CD14-positive monocyte (primary cell): ENCODE measurements at regions of chr5 and their contacts with region 1.

Region 1: GRCh38 chr5:67209142-67209771 is 12.7 kb upstream of the CD180 start:
- DNase-seq: peak; percentile 66 to 83 (median 74)
- H3K4me3 ChIP-seq: no peak overlapping the region
- H3K4me3 Mint-ChIP-seq: peak overlapping the region; percentile 44 to 52
- H3K27ac ChIP-seq: no peak overlapping the region
- H3K27ac Mint-ChIP-seq: peak overlapping the region in 4 of 7 donors; percentile 5 to 59 (median 25)
- H3K4me1 ChIP-seq: peaks cover 41 to 43% of the 10 kb centered on the region in 2 donors
- H3K4me1 Mint-ChIP-seq: peaks cover 47% of the 10 kb centered on the region
- H3K27me3 ChIP-seq: no peaks in the 10 kb centered on the region
- H3K27me3 Mint-ChIP-seq: peaks cover 0 to 5% (median 4%) of the 10 kb centered on the region in 3 donors
- CTCF ChIP-seq: peak; percentile 86

Region 2: GRCh38 chr5:67156976-67157583 is 52.2 kb before region 1 on chr5:
- intact Hi-C with region 1: loop called in 1 of 2 experiments (anchors 5 kb)
- DNase-seq: peak; percentile 22 to 54 (median 40)
- H3K4me3 ChIP-seq: no peak overlapping the region
- H3K4me3 Mint-ChIP-seq: no peak overlapping the region
- H3K27ac ChIP-seq: no peak overlapping the region
- H3K27ac Mint-ChIP-seq: no peak overlapping the region
- H3K4me1 ChIP-seq: peaks cover 0 to 9% of the 10 kb centered on the region in 2 donors
- H3K4me1 Mint-ChIP-seq: peaks cover 8% of the 10 kb centered on the region
- H3K27me3 ChIP-seq: no peaks in the 10 kb centered on the region
- H3K27me3 Mint-ChIP-seq: peaks cover 0 to 2% (median 0%) of the 10 kb centered on the region in 3 donors
- CTCF ChIP-seq: peak; percentile 96

Region 3: DNA sequence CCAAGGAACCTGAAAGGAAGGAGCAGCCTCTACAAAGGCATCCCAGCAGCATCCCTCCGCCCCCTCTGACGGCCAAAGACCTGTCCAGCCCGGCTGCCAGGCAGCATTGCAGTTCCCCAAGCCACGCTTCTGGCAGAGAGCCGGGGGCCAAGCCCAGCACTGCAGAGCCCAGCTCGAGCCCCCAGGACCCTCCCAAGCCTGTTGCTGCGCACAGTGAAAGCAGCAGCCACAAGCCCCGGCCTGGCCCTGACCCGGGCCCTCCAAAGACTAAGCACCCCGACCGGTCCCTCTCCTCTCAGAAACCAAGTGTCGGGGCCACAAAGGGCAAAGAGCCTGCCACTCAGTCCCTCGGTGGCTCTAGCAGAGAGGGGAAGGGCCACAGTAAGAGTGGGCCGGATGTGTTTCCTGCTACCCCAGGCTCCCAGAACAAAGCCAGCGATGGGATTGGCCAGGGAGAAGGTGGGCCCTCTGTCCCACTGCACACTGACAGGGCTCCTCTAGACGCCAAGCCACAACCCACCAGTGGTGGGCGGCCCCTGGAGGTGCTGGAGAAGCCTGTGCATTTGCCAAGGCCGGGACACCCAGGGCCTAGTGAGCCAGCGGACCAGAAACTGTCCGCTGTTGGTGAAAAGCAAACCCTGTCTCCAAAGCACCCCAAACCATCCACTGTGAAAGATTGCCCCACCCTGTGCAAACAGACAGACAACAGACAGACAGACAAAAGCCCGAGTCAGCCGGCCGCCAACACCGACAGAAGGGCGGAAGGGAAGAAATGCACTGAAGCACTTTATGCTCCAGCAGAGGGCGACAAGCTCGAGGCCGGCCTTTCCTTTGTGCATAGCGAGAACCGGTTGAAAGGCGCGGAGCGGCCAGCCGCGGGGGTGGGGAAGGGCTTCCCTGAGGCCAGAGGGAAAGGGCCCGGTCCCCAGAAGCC is 43.5 kb before region 1 on chr5:
- intact Hi-C with region 1: loop called (anchors 1 to 5 kb)
- DNase-seq: peak; percentile 79 to 89 (median 83)
- H3K4me3 ChIP-seq: peak overlapping the region; percentile 29 to 64 (median 49)
- H3K4me3 Mint-ChIP-seq: peak overlapping the region; percentile 75 to 91
- H3K27ac ChIP-seq: peak overlapping the region; percentile 85 to 87
- H3K27ac Mint-ChIP-seq: peak overlapping the region; percentile 85 to 97 (median 89)
- H3K4me1 ChIP-seq: peaks cover 27 to 43% of the 10 kb centered on the region in 2 donors
- H3K4me1 Mint-ChIP-seq: peaks cover 29% of the 10 kb centered on the region
- H3K27me3 ChIP-seq: no peaks in the 10 kb centered on the region
- H3K27me3 Mint-ChIP-seq: peaks cover 0 to 3% (median 0%) of the 10 kb centered on the region in 3 donors
- CTCF ChIP-seq: peak; percentile 80

Region 4: GRCh38 chr5:67338421-67338820 is 129.2 kb after region 1 on chr5:
- intact Hi-C with region 1: no loop called
- DNase-seq: no peak
- H3K4me3 ChIP-seq: no peak overlapping the region
- H3K4me3 Mint-ChIP-seq: no peak overlapping the region
- H3K27ac ChIP-seq: no peak overlapping the region
- H3K27ac Mint-ChIP-seq: no peak overlapping the region
- H3K4me1 ChIP-seq: no peaks in the 10 kb centered on the region
- H3K4me1 Mint-ChIP-seq: no peaks in the 10 kb centered on the region
- H3K27me3 ChIP-seq: no peaks in the 10 kb centered on the region
- H3K27me3 Mint-ChIP-seq: peaks cover 0 to 4% (median 0%) of the 10 kb centered on the region in 3 donors
- CTCF ChIP-seq: no peak